ENCODE measurements at regions of chr1 and their contacts with region 1.

Region 1: GRCh38 chr1:184051485-184052193 is at the start of gene TSEN15:
- DNase-seq: peak; percentile 88 to 89
- H3K4me3 ChIP-seq: peak within 1 kb of the TSS; percentile 86
- H3K4me3 Mint-ChIP-seq: peak within 1 kb of the TSS; percentile 88
- H3K27ac Mint-ChIP-seq: peak within 1 kb of the TSS; percentile 100
- H3K4me1 ChIP-seq: peaks cover 19% of the 10 kb centered on the region
- H3K4me1 Mint-ChIP-seq: peaks cover 31% of the 10 kb centered on the region
- H3K27me3 ChIP-seq: no peaks in the 10 kb centered on the region
- H3K27me3 Mint-ChIP-seq: no peaks in the 10 kb centered on the region
- CTCF ChIP-seq: no peak
- total RNA-seq, gene TSEN15: 62.7 and 71.4 TPM in 2 replicates

Region 2: DNA sequence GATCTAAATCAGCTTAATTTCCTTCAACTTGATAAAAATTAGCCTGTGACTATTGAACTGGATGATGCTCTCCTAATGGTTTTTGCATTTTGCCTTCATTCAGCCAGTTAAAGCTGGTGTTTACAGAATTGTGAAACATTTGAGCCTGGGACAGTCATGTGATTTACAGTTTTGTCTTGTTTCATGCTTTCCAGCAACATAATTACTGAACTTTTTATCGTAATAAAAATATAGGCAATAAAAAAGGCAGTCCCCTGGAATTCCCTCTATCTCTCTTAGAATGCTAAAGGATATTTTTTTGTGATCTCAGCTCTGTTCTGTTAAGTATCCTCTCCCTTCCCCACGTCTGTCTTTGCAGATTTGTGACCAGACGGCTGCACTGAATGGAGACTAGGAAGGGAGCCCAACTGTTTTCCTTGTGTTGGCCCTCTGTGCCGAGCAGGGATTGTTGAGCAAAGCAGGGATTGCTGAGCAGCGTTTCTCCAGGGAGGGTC is 317.0 kb before region 1 on chr1:
- CTCF ChIA-PET with region 1: no interaction called
- POLR2A ChIA-PET with region 1: no interaction called
- intact Hi-C with region 1: loop called (anchors 10 kb)
- DNase-seq: peak; percentile 39 to 42
- H3K4me3 ChIP-seq: no peak overlapping the region
- H3K4me3 Mint-ChIP-seq: peak overlapping the region; percentile 25
- H3K27ac Mint-ChIP-seq: peak overlapping the region; percentile 68
- H3K4me1 ChIP-seq: peaks cover 82% of the 10 kb centered on the region
- H3K4me1 Mint-ChIP-seq: peaks cover 60% of the 10 kb centered on the region
- H3K27me3 ChIP-seq: no peaks in the 10 kb centered on the region
- H3K27me3 Mint-ChIP-seq: no peaks in the 10 kb centered on the region
- CTCF ChIP-seq: no peak

Region 3: DNA sequence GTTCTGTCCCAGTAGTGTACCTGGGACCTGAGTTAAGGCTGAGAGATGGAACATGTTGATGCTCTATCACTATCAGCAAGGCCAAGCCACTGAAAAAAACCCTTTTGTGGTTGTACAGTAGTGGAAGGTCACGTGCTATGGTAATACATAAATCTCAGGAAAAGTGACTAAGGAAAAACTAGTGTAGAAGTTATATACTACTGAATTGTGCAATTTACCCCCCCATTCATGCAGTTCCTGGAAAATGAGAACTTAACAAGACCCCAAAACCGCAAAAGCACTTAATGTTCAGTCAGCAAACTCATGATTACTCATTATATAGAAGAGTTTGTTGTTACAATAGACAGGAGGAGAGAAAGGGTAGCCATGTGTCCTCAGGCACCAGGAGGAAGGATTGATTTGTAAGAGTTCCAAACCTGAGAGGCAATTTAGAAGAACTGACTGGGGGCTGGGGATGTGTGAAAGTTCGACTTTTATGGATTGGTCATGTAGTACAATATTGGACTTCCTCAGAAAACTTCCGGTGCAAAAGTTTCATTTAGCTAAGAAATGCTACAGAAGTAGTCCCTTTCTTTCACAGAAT is 155.1 kb before region 1 on chr1:
- CTCF ChIA-PET with region 1: no interaction called
- POLR2A ChIA-PET with region 1: no interaction called
- intact Hi-C with region 1: no loop called
- DNase-seq: no peak
- H3K4me3 ChIP-seq: no peak overlapping the region
- H3K4me3 Mint-ChIP-seq: no peak overlapping the region
- H3K27ac Mint-ChIP-seq: no peak overlapping the region
- H3K4me1 ChIP-seq: peaks cover 9% of the 10 kb centered on the region; the same call in 1 of the 2 replicates
- H3K4me1 Mint-ChIP-seq: no peaks in the 10 kb centered on the region
- H3K27me3 ChIP-seq: no peaks in the 10 kb centered on the region
- H3K27me3 Mint-ChIP-seq: no peaks in the 10 kb centered on the region
- CTCF ChIP-seq: no peak

Region 4: DNA sequence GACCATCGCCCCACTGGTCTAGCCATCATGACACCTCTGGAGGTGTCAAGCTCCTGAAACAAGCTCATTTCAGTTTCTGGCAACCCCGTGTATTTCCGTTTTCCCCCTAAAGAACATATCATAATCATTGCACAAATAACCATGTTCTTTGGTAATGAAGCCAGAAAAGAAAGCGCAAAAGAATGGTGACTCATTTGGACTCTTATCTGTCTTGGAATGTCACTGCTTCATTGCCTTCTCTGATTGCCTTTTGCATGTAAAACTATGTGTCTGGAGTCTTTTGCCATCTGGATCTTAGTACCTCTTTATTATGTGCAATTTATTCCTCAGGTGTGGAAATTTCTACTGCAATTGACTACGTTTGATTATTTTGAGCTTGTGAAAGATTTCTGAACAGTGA is 124.7 kb before region 1 on chr1:
- CTCF ChIA-PET with region 1: no interaction called
- POLR2A ChIA-PET with region 1: interaction called, 7 read pairs
- intact Hi-C with region 1: loop called (anchors 1 kb)
- DNase-seq: peak in 1 of 2 experiments; percentile 40
- H3K4me3 ChIP-seq: no peak overlapping the region
- H3K4me3 Mint-ChIP-seq: peak overlapping the region; percentile 52
- H3K27ac Mint-ChIP-seq: peak overlapping the region; percentile 86
- H3K4me1 ChIP-seq: peaks cover 27% of the 10 kb centered on the region
- H3K4me1 Mint-ChIP-seq: peaks cover 23% of the 10 kb centered on the region
- H3K27me3 ChIP-seq: no peaks in the 10 kb centered on the region
- H3K27me3 Mint-ChIP-seq: no peaks in the 10 kb centered on the region
- CTCF ChIP-seq: no peak

Region 5: GRCh38 chr1:183995322-183996039 is 56.2 kb before region 1 on chr1:
- CTCF ChIA-PET with region 1: no interaction called
- POLR2A ChIA-PET with region 1: interaction called, 19 read pairs
- intact Hi-C with region 1: loop called (anchors 1 kb)
- DNase-seq: peak in 1 of 2 experiments; percentile 23
- H3K4me3 ChIP-seq: no peak overlapping the region
- H3K4me3 Mint-ChIP-seq: peak overlapping the region; percentile 69
- H3K27ac Mint-ChIP-seq: peak overlapping the region; percentile 92
- H3K4me1 ChIP-seq: peaks cover 61% of the 10 kb centered on the region
- H3K4me1 Mint-ChIP-seq: peaks cover 46% of the 10 kb centered on the region
- H3K27me3 ChIP-seq: no peaks in the 10 kb centered on the region
- H3K27me3 Mint-ChIP-seq: no peaks in the 10 kb centered on the region
- CTCF ChIP-seq: no peak

Region 6: GRCh38 chr1:184036517-184036949 is 15.1 kb before region 1 on chr1:
- CTCF ChIA-PET with region 1: no interaction called
- POLR2A ChIA-PET with region 1: interaction called, 6 read pairs
- intact Hi-C with region 1: loop called (anchors 1 kb)
- DNase-seq: peak; percentile 51 to 62
- H3K4me3 ChIP-seq: peak overlapping the region; percentile 82
- H3K4me3 Mint-ChIP-seq: peak overlapping the region; percentile 86
- H3K27ac Mint-ChIP-seq: no peak overlapping the region
- H3K4me1 ChIP-seq: peaks cover 15% of the 10 kb centered on the region; the same call in 1 of the 2 replicates
- H3K4me1 Mint-ChIP-seq: peaks cover 26% of the 10 kb centered on the region
- H3K27me3 ChIP-seq: no peaks in the 10 kb centered on the region
- H3K27me3 Mint-ChIP-seq: peaks cover 5% of the 10 kb centered on the region
- CTCF ChIP-seq: no peak

Measured in Caco-2 (cell line).